ENCODE measurements at regions of chr2 and their contacts with region 1.

Region 1: GRCh38 chr2:45169339-45170190 is 160.3 kb upstream of the SIX2 start:
- DNase-seq: peak; percentile 57
- H3K4me3 Mint-ChIP-seq: peak overlapping the region; percentile 95
- H3K27ac Mint-ChIP-seq: peak overlapping the region; percentile 92
- H3K4me1 Mint-ChIP-seq: peaks cover 26% of the 10 kb centered on the region
- H3K27me3 Mint-ChIP-seq: no peaks in the 10 kb centered on the region
- CTCF ChIP-seq: no peak

Region 2: DNA sequence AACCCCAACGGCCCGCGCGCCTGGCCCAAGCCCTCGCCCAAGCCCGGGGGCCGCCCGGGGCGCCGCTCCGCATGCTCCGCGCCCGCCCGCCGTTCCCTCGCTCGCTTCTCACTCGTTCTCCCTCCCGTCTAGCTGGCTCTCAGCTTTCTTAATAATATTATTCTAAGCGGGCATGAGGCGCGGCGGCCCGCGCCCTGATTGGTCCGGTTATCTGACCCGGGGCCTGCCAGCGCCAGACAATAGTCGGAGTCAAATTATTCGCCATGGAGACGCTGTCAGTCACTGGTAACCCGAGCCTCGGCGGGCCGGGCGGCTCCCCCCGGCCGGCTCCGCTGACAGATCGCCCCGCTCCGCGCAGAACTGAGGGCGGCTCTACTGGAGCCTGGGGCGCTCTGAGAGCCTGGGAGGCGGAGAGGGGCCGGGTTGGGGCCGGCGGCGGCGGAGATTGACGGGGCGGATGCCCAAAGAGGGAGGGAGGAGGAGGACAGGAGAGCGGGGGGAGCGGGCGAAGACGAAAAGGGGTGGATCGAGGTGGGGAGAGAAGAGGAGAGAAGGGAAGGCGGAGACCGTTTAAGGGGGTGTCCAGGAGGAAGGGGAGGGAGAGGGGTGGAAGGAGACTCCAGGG is 160.2 kb before region 1 on chr2 and contains the start of gene SIX2:
- CTCF ChIA-PET with region 1: no interaction called
- POLR2A ChIA-PET with region 1: interaction called, 11 read pairs
- intact Hi-C with region 1: loop called (anchors 5 kb)
- DNase-seq: peak; percentile 98
- H3K4me3 Mint-ChIP-seq: peak within 1 kb of the TSS; percentile 89
- H3K27ac Mint-ChIP-seq: peak within 1 kb of the TSS; percentile 40
- H3K4me1 Mint-ChIP-seq: peaks cover 7% of the 10 kb centered on the region
- H3K27me3 Mint-ChIP-seq: no peaks in the 10 kb centered on the region
- CTCF ChIP-seq: no peak
- total RNA-seq, gene SIX2: 0.96 and 1.2 TPM in 2 replicates

Region 3: GRCh38 chr2:45184606-45185005 is 15.0 kb after region 1 on chr2:
- CTCF ChIA-PET with region 1: interaction called, 11 read pairs
- POLR2A ChIA-PET with region 1: interaction called, 18 read pairs
- intact Hi-C with region 1: no loop called
- DNase-seq: peak; percentile 87
- H3K4me3 Mint-ChIP-seq: no peak overlapping the region
- H3K27ac Mint-ChIP-seq: peak overlapping the region; percentile 62
- H3K4me1 Mint-ChIP-seq: peaks cover 52% of the 10 kb centered on the region
- H3K27me3 Mint-ChIP-seq: no peaks in the 10 kb centered on the region
- CTCF ChIP-seq: no peak

Region 4: DNA sequence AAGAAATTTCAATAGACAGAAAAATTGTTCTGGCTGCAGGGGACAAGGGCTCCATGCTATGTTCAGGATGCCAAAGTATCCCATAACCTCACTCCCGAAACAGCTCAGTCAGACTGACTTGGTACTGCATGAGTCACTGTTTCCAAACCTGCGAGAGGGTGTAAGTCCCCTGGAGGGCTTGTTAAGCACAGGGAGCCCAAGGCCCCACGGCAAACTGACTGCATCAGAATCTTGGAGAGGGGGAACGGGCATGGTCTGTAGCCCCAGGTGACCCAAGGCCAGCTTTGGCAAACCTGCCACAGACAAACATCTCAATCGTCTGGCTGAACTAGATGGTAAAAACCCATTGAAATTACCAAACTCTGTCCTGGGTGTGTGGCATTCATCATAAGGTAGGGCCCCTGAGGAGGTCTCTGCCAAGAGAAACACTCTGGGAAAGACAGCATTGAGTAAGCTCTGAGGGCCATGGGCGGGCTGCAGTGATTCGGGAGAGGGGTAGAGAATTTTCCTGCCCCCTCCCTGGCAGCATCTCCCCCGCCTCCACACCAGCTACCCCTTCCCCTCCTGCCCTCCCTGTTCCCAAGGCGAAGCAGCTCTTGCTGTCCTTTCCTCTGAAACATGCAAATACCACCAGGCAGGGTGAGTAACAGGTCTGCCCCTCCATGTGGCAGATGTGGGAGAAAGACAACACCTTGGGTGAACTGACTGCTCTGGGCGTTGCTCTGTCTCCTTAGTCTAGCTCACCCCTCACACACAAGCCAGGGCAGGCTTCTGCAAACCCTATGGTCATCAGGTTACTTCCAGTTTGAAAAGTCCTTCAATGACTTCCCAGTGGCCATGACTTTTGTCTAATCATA is 114.4 kb after region 1 on chr2:
- CTCF ChIA-PET with region 1: no interaction called
- POLR2A ChIA-PET with region 1: interaction called, 8 read pairs
- intact Hi-C with region 1: loop called (anchors 5 kb)
- DNase-seq: peak; percentile 97
- H3K4me3 Mint-ChIP-seq: peak overlapping the region; percentile 36
- H3K27ac Mint-ChIP-seq: peak overlapping the region; percentile 44
- H3K4me1 Mint-ChIP-seq: peaks cover 24% of the 10 kb centered on the region
- H3K27me3 Mint-ChIP-seq: no peaks in the 10 kb centered on the region
- CTCF ChIP-seq: no peak